HepG2 (cell line): ENCODE measurements at regions of chr1 and their contacts with region 1.

Region 1: DNA sequence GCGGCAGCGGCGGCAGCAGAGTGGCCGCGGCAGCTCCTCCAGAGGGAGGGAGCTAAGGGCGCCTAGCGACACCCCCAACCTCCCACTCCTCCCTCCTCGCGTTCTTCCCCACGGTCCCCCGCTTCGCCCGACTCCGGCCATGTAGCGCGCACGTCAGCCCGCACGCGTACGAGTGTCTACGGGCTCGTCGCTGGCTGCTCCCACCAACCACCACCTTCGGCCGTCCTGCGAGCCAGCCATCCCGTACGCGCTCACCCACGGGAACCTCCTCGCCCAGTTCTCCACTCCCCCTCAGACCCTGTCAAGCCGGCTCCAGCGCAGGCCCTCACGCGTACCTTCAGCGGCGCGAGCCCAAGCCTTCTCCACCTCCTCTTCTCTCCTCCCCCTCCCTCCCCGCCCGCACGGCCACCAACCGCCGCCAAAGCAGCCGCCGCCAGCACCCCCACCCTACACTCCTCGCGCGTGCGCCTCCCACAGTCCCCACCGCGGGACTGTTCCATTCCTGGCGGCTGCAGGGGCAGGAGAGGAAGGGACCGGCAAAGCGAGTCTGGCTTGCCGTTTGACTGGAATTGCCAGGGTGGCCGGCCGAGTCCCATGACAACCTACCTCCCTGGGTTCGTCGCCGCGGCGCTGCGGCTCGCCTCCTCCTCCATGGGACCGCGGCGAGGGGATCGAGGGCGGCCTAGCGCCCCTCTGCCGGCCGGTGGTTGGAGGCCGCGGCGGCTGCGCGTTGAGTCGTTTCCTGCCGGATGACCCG is at the start of gene YY1AP1:
- DNase-seq: peak; percentile 70
- ATAC-seq: peak; percentile 89
- H3K4me3 ChIP-seq: peak within 1 kb of the TSS; percentile 74 to 100 (median 95)
- H3K27ac ChIP-seq: peak within 1 kb of the TSS; percentile 96
- H3K4me1 ChIP-seq: peaks cover 59% of the 10 kb centered on the region
- H3K27me3 ChIP-seq: no peaks in the 10 kb centered on the region; a peak in 1 of 5 replicates
- CTCF ChIP-seq: no peak
- EP300 ChIP-seq: no peak
- POLR2A ChIP-seq: peak; percentile 39 to 62; a peak in 3 of 4 replicates
- RAD21 ChIP-seq: peak; percentile 51; the same call in 1 of the 2 replicates
- total RNA-seq, gene YY1AP1: 28.5 and 33.9 TPM in 2 replicates

Region 2: GRCh38 chr1:155698382-155699038 is 10.0 kb after region 1 on chr1:
- CTCF ChIA-PET with region 1: no interaction called
- POLR2A ChIA-PET with region 1: interaction called, 10 read pairs
- in situ Hi-C with region 1: no loop called
- intact Hi-C with region 1: no loop called
- DNase-seq: peak; percentile 81
- ATAC-seq: peak; percentile 94
- H3K4me3 ChIP-seq: peak overlapping the region; percentile 49 to 80 (median 63)
- H3K27ac ChIP-seq: peak overlapping the region; percentile 85
- H3K4me1 ChIP-seq: peaks cover 65% of the 10 kb centered on the region
- H3K27me3 ChIP-seq: no peaks in the 10 kb centered on the region
- CTCF ChIP-seq: no peak
- EP300 ChIP-seq: 0 out of 4 replicates have a peak, but pooled peaks of 1 of the 2 experiments have one; percentile 20
- POLR2A ChIP-seq: peak in 1 of 2 experiments; percentile 8; a peak in 1 of 4 replicates
- RAD21 ChIP-seq: no peak

Region 3: GRCh38 chr1:155709391-155709790 is 20.9 kb after region 1 on chr1:
- CTCF ChIA-PET with region 1: no interaction called
- POLR2A ChIA-PET with region 1: no interaction called
- in situ Hi-C with region 1: no loop called
- intact Hi-C with region 1: no loop called
- DNase-seq: no peak
- ATAC-seq: no peak
- H3K4me3 ChIP-seq: no peak overlapping the region
- H3K27ac ChIP-seq: no peak overlapping the region
- H3K4me1 ChIP-seq: no peaks in the 10 kb centered on the region
- H3K27me3 ChIP-seq: no peaks in the 10 kb centered on the region; a peak in 1 of 5 replicates
- CTCF ChIP-seq: no peak
- EP300 ChIP-seq: no peak
- POLR2A ChIP-seq: no peak
- RAD21 ChIP-seq: no peak

Region 4: DNA sequence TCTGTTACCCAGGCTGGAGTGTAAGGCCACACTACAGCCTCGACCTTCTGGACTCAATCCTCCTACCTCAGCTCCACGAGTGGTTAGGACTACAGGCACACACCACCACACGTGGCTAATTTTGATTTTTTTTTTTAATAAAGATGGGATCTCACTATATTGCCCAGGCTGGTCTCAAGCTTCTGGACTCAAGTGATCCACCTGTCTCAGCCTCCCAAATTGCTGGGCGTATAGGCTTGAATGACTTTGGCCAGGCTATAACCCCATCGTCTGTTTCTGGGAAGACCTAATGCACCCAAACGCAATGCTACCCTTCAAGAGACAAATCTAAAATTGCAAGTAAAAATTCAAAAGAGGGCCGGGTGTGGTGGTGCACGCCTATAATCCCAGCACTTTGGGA is 52.5 kb after region 1 on chr1:
- CTCF ChIA-PET with region 1: no interaction called
- POLR2A ChIA-PET with region 1: no interaction called
- in situ Hi-C with region 1: no loop called
- intact Hi-C with region 1: no loop called
- DNase-seq: no peak
- ATAC-seq: no peak
- H3K4me3 ChIP-seq: no peak overlapping the region
- H3K27ac ChIP-seq: no peak overlapping the region
- H3K4me1 ChIP-seq: peaks cover 6% of the 10 kb centered on the region; the same call in 1 of the 2 replicates
- H3K27me3 ChIP-seq: no peaks in the 10 kb centered on the region
- CTCF ChIP-seq: no peak
- EP300 ChIP-seq: no peak
- POLR2A ChIP-seq: no peak
- RAD21 ChIP-seq: no peak

Region 5: DNA sequence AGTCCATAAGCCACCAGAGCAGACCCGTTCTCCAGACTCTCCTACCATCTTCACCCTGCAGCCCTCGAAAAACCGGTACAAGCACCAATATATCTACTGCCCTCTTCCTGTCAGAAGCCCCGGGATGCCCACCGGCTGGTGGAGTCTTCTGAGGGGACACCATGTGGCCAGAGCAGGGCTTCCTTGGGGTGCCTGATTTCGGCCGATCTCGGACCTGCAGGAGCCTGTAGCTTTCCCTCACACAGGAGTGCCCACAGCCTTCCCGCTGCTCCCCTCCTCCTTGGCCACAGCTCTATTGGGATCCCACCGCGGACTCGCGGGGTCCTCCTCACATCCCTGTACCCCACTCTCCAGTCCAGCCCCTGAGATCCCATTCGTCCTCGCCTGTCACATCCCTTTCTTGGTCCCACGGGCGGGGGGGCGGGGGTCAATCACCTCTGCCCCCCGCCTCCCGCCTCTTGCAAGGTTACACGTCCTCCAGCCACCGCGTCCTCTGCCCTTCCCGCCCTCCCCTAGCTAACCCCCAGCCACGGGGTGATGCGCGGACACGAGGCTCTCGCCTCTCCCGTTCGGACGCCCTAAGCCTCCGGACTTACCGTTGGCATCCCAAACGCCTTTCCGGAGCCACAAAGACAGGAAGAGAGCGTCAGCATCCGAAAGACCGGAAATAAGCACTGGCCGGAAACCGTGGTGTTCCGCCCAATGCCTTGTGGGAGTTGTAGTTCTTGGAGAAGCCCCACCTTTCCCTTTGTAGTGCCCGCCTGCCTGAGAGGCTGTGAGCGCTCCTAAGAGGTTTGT is 332.0 kb after region 1 on chr1 and contains the start of gene SSR2:
- CTCF ChIA-PET with region 1: no interaction called
- POLR2A ChIA-PET with region 1: no interaction called
- in situ Hi-C with region 1: no loop called
- intact Hi-C with region 1: no loop called
- DNase-seq: peak; percentile 92
- ATAC-seq: peak; percentile 97
- H3K4me3 ChIP-seq: peak within 1 kb of the TSS; percentile 92
- H3K27ac ChIP-seq: peak within 1 kb of the TSS; percentile 54
- H3K4me1 ChIP-seq: peaks cover 33% of the 10 kb centered on the region
- H3K27me3 ChIP-seq: no peaks in the 10 kb centered on the region; a peak in 1 of 5 replicates
- CTCF ChIP-seq: no peak
- EP300 ChIP-seq: 0 out of 4 replicates have a peak, but pooled peaks of 1 of the 2 experiments have one; percentile 24
- POLR2A ChIP-seq: peak; percentile 83 to 90
- RAD21 ChIP-seq: no peak
- total RNA-seq, gene SSR2: 150 and 284 TPM in 2 replicates